ENCODE measurements at regions of chr2 and their contacts with region 1.

Region 1: GRCh38 chr2:144198117-144198516 is 321.8 kb downstream of the ZEB2 start:
- DNase-seq: no peak
- H3K4me3 Mint-ChIP-seq: no peak overlapping the region
- H3K27ac Mint-ChIP-seq: peak overlapping the region; percentile 75
- H3K4me1 Mint-ChIP-seq: peaks cover 58% of the 10 kb centered on the region
- H3K27me3 Mint-ChIP-seq: no peaks in the 10 kb centered on the region

Region 2: GRCh38 chr2:144183727-144184126 is 14.4 kb before region 1 on chr2:
- CTCF ChIA-PET with region 1: interaction called, 3 read pairs
- POLR2A ChIA-PET with region 1: interaction called, 5 read pairs
- intact Hi-C with region 1: loop called (anchors 1 kb)
- DNase-seq: peak; percentile 89
- H3K4me3 Mint-ChIP-seq: peak overlapping the region; percentile 52
- H3K27ac Mint-ChIP-seq: peak overlapping the region; percentile 87
- H3K4me1 Mint-ChIP-seq: peaks cover 37% of the 10 kb centered on the region
- H3K27me3 Mint-ChIP-seq: no peaks in the 10 kb centered on the region

Region 3: GRCh38 chr2:144213797-144214196 is 15.7 kb after region 1 on chr2:
- CTCF ChIA-PET with region 1: no interaction called
- POLR2A ChIA-PET with region 1: interaction called, 7 read pairs
- intact Hi-C with region 1: loop called (anchors 1 kb)
- DNase-seq: no peak
- H3K4me3 Mint-ChIP-seq: peak overlapping the region; percentile 11
- H3K27ac Mint-ChIP-seq: peak overlapping the region; percentile 53
- H3K4me1 Mint-ChIP-seq: peaks cover 38% of the 10 kb centered on the region
- H3K27me3 Mint-ChIP-seq: no peaks in the 10 kb centered on the region

Region 4: GRCh38 chr2:144237830-144238627 is 39.9 kb after region 1 on chr2:
- CTCF ChIA-PET with region 1: no interaction called
- POLR2A ChIA-PET with region 1: interaction called, 7 read pairs
- intact Hi-C with region 1: loop called (anchors 2 kb)
- DNase-seq: no peak
- H3K4me3 Mint-ChIP-seq: no peak overlapping the region
- H3K27ac Mint-ChIP-seq: no peak overlapping the region
- H3K4me1 Mint-ChIP-seq: peaks cover 53% of the 10 kb centered on the region
- H3K27me3 Mint-ChIP-seq: no peaks in the 10 kb centered on the region

Region 5: DNA sequence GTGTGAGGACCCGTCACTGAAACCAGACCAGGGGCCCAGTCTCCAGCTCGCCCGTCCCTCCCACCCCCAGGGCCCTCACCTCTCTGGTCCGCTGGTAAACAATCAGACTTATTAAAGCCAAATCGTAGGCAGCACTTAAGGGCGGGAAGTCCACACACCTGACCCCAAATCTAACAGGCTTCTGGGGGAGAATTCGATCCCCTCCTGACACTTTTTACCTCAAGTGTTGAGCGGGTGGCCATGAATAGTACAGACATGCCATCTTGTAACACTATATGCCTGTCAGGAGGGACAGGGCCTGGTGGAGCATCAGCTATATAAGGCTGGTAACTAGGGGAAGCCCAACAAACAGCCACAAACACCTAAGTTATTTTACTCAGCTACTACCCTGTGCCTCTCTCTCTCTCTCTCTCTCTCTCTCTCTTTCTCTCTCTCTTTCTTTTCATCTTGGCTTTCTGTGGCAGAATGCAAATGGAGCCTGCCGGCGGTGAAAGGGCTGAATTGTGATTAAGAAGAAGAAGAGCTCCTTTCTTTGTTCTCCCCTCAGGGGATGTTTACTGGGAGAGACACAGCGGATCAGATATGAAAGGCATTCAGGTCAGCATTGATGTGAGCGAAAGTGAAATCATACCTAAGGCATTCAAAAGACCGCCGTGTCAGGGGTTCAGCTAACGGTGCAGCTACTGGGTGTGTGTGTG is 312.3 kb after region 1 on chr2:
- CTCF ChIA-PET with region 1: no interaction called
- POLR2A ChIA-PET with region 1: no interaction called
- intact Hi-C with region 1: loop called (anchors 1 kb)
- DNase-seq: peak; percentile 62
- H3K4me3 Mint-ChIP-seq: peak overlapping the region; percentile 54
- H3K27ac Mint-ChIP-seq: peak overlapping the region; percentile 70
- H3K4me1 Mint-ChIP-seq: peaks cover 30% of the 10 kb centered on the region
- H3K27me3 Mint-ChIP-seq: peaks cover 57% of the 10 kb centered on the region